CD8-positive, alpha-beta T cell (primary cell): ENCODE measurements at regions of chr16 and their contacts with region 1.

Region 1: DNA sequence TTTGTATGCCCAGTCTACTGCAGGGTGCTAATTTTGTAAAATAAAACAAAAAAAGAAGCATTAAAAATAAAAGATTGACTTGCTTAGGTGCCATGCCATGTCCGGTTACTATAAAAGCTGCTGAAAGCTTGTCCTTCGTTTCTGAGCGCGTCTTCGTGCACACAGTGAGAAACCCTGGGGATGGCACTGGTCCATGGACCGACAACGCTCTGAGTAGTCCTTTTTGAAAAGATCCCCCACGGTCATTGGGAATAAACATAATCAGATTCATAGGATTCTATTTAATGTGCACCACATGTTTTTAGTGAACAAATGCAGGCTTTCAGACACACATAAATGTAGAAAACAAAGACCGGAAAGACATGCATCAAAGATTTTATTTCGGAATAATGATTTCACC is 146.3 kb downstream of the XYLT1 start:
- DNase-seq: no peak
- ATAC-seq: no peak
- H3K4me3 ChIP-seq: no peak overlapping the region
- H3K4me3 Mint-ChIP-seq: no peak overlapping the region
- H3K27ac ChIP-seq: no peak overlapping the region
- H3K27ac Mint-ChIP-seq: no peak overlapping the region
- H3K4me1 ChIP-seq: no peaks in the 10 kb centered on the region
- H3K4me1 Mint-ChIP-seq: peaks cover 18% of the 10 kb centered on the region
- H3K27me3 ChIP-seq: no peaks in the 10 kb centered on the region
- H3K27me3 Mint-ChIP-seq: no peaks in the 10 kb centered on the region
- CTCF ChIP-seq: no peak

Region 2: GRCh38 chr16:17301593-17302135 is 22.8 kb before region 1 on chr16:
- CTCF ChIA-PET with region 1: interaction called, 3 read pairs
- POLR2A ChIA-PET with region 1: interaction called, 4 read pairs
- intact Hi-C with region 1: loop called in 1 of 2 experiments (anchors 2 kb)
- DNase-seq: peak in 2 of 9 experiments; percentile 7 to 39
- ATAC-seq: peak; percentile 26
- H3K4me3 ChIP-seq: no peak overlapping the region
- H3K4me3 Mint-ChIP-seq: no peak overlapping the region
- H3K27ac ChIP-seq: no peak overlapping the region
- H3K27ac Mint-ChIP-seq: no peak overlapping the region
- H3K4me1 ChIP-seq: peaks cover 27% of the 10 kb centered on the region
- H3K4me1 Mint-ChIP-seq: peaks cover 37% of the 10 kb centered on the region
- H3K27me3 ChIP-seq: no peaks in the 10 kb centered on the region
- H3K27me3 Mint-ChIP-seq: no peaks in the 10 kb centered on the region
- CTCF ChIP-seq: no peak

Region 3: DNA sequence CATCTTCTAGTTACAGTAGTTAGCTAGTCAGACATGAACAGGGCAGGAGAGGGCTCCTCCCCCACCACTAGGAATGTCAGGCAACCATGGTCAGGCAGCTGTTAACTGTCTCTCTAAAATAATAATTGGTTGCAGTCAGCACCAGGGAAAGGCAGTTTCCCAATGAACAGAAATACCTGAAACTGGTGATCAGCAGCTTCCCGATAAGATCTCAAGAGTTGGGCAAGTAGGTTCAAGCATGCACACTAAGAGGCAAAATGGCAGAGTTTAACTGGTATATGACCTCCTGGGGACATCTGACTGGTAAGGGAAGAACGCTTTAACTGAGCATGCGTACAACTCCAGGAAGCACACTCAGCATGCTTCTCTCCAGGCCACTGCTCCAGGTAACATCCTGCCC is 158.9 kb after region 1 on chr16:
- CTCF ChIA-PET with region 1: no interaction called
- POLR2A ChIA-PET with region 1: no interaction called
- intact Hi-C with region 1: no loop called
- DNase-seq: no peak
- ATAC-seq: no peak
- H3K4me3 ChIP-seq: no peak overlapping the region
- H3K4me3 Mint-ChIP-seq: no peak overlapping the region
- H3K27ac ChIP-seq: no peak overlapping the region
- H3K27ac Mint-ChIP-seq: no peak overlapping the region
- H3K4me1 ChIP-seq: no peaks in the 10 kb centered on the region
- H3K4me1 Mint-ChIP-seq: no peaks in the 10 kb centered on the region
- H3K27me3 ChIP-seq: no peaks in the 10 kb centered on the region
- H3K27me3 Mint-ChIP-seq: peaks cover 24% of the 10 kb centered on the region
- CTCF ChIP-seq: no peak